Right ventricle myocardium inferior (tissue), 1 donor: ENCODE measurements at regions of chr14 and their contacts with region 1.

Region 1: DNA sequence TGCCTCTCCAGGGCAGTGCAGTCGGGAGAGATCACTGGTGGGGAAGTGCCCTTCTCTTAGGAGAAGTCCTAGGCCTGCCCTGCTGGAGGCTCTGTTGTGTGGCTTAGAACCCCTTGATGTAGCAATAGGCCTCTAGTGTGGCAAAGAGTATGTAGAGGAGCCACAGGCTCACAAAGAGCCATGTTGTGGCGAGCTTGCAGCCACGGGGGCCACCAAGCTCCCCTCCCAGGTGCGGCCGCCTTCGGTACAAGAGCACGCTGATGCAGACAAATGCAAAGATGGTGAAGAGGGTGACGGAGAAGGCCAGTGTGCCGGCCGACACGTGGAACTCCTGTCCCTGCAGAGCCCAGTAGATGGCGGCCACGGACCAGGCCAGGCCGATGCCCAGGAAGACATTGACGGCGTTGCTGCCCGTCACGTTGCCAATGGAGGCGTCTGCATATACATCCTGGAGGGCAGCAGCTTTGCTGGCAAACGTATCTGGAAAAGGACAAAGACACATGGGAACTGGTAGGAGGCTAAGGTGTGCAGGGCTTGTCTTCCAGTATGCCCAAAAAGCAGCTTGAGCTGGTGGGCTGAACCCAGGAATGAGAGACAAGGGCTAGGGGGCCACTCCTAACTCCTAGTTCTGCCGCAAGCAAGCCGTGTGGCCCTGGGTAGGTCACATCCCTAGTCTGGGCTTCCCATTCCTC is 142.8 kb downstream of the SLC8A3 start:
- DNase-seq: peak; percentile 81
- ATAC-seq: peak; percentile 71

Region 2: GRCh38 chr14:70809543-70810244 is 763.7 kb after region 1 on chr14:
- intact Hi-C with region 1: loop called (anchors 10 kb)
- DNase-seq: peak; percentile 91
- ATAC-seq: peak; percentile 96